ENCODE measurements at regions of chr16 and their contacts with region 1.

Region 1: DNA sequence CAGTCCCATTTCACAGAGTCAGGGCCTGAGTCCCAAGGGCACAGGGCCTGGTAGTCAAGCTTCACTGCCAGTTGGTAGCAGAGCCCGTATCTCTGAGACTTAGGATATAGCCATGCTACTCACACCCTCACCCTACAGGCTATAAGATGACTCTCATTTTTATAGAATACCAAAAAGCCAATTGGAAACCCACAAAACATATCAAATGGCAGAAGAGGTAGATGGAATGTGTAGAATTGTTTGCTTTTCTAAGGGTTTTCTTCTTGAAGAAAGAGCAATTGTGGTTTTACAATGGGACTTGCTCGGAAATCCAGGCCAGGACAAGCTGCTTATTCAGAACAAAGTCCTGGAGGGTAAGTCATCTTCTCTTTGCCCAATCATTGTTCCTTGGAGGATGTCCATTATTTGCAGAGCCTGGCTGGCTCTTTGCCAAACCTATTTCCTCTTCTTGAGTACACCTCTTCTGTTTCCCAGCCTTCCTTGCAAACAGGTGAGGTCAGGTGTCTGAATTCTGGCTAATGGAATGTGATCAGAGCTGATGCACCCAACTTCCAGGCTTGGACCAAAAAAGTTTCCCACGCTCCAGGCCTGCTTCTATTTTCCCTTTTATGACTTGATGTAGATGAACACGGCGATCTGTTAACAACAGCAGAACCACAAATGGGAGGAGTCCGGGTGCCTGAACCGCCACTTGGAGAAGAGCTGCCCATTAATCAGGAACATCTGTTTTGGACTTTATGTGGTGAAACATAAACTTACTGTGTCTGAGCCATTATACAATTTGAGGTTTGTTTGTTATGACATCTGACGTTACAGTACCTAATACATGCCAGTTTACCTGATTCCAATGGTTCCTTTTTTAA is 16.9 kb upstream of the CCL22 start:
- DNase-seq: no peak
- H3K4me3 ChIP-seq: no peak overlapping the region
- H3K27ac ChIP-seq: peak overlapping the region in 3 of 4 donors; percentile 1 to 33 (median 18)
- H3K4me1 ChIP-seq: peaks cover 0 to 14% (median 8%) of the 10 kb centered on the region in 4 donors
- H3K27me3 ChIP-seq: no peaks in the 10 kb centered on the region
- CTCF ChIP-seq: no peak
- EP300 ChIP-seq: no peak
- POLR2A ChIP-seq: no peak

Region 2: GRCh38 chr16:57061084-57061905 is 280.4 kb before region 1 on chr16:
- intact Hi-C with region 1: no loop called
- DNase-seq: peak; percentile 92
- H3K4me3 ChIP-seq: no peak overlapping the region
- H3K27ac ChIP-seq: peak overlapping the region; percentile 67 to 74 (median 68)
- H3K4me1 ChIP-seq: peaks cover 0 to 13% (median 9%) of the 10 kb centered on the region in 4 donors
- H3K27me3 ChIP-seq: no peaks in the 10 kb centered on the region
- CTCF ChIP-seq: no peak
- EP300 ChIP-seq: peak in 1 of 4 donors; percentile 23
- POLR2A ChIP-seq: no peak

Region 3: GRCh38 chr16:57380671-57381462 is 39.2 kb after region 1 on chr16:
- intact Hi-C with region 1: loop called (anchors 2 kb)
- DNase-seq: no peak
- H3K4me3 ChIP-seq: no peak overlapping the region
- H3K27ac ChIP-seq: peak overlapping the region in 3 of 4 donors; percentile 17 to 95 (median 27)
- H3K4me1 ChIP-seq: peaks cover 0 to 38% (median 32%) of the 10 kb centered on the region in 4 donors
- H3K27me3 ChIP-seq: no peaks in the 10 kb centered on the region
- CTCF ChIP-seq: no peak
- EP300 ChIP-seq: no peak
- POLR2A ChIP-seq: no peak

Measured in sigmoid colon (tissue), 7 donors.